ENCODE measurements at regions of chr6 and their contacts with region 1.

Region 1: GRCh38 chr6:8006208-8006607 is 58.0 kb downstream of the BLOC1S5 start:
- DNase-seq: no peak
- ATAC-seq: no peak
- H3K4me3 ChIP-seq: no peak overlapping the region
- H3K27ac ChIP-seq: no peak overlapping the region
- H3K4me1 ChIP-seq: no peaks in the 10 kb centered on the region
- H3K27me3 ChIP-seq: no peaks in the 10 kb centered on the region

Region 2: GRCh38 chr6:7725849-7726415 is 280.3 kb before region 1 on chr6 and contains the start of gene BMP6:
- intact Hi-C with region 1: loop called (anchors 5 to 10 kb)
- DNase-seq: peak; percentile 86 to 93
- ATAC-seq: peak; percentile 94
- H3K4me3 ChIP-seq: peak within 1 kb of the TSS; percentile 9 to 47
- H3K27ac ChIP-seq: no peak within 1 kb of the TSS
- H3K4me1 ChIP-seq: no peaks in the 10 kb centered on the region
- H3K27me3 ChIP-seq: no peaks in the 10 kb centered on the region
- total RNA-seq, gene BMP6: 1.2 to 5.2 TPM

Region 3: DNA sequence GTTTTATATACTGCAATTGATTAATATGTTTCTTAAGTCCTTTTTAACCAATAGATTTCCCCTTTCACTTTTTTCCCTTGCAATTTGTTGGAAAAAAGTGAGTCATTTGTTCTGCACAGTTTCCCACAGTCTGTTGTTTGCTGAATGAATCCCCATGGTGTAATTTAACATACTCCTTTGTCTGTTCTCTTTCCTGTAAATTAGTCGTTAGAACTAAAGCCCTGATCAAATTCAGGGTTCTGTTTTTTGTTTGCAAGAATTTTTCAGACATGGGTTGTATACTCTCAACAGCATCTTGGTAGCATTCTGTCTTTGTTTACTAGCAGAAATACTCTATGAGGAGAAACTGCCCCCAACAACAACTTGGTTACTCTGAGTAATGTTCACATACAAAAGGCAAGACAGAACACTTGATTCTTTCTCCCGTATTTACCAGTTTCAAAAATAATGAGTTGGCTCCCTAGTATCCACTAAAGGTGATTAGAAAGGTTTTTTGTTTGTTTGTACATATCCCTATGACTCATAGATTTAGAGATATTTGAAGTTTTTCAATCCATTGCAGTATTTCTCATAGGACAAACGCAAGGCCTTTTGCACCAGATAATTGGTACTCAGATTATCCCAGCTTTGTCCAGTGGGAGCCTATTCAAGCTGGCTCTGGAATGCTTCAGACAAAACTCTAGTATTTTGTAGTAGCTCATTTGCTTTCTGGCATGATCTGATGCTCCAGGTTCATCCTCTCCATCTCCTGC is 41.5 kb after region 1 on chr6:
- intact Hi-C with region 1: no loop called
- DNase-seq: no peak
- ATAC-seq: peak; percentile 56
- H3K4me3 ChIP-seq: no peak overlapping the region
- H3K27ac ChIP-seq: no peak overlapping the region
- H3K4me1 ChIP-seq: no peaks in the 10 kb centered on the region
- H3K27me3 ChIP-seq: no peaks in the 10 kb centered on the region

Measured in aorta (tissue), 5 donors.